ENCODE measurements at regions of chr22 and their contacts with region 1.

Region 1: DNA sequence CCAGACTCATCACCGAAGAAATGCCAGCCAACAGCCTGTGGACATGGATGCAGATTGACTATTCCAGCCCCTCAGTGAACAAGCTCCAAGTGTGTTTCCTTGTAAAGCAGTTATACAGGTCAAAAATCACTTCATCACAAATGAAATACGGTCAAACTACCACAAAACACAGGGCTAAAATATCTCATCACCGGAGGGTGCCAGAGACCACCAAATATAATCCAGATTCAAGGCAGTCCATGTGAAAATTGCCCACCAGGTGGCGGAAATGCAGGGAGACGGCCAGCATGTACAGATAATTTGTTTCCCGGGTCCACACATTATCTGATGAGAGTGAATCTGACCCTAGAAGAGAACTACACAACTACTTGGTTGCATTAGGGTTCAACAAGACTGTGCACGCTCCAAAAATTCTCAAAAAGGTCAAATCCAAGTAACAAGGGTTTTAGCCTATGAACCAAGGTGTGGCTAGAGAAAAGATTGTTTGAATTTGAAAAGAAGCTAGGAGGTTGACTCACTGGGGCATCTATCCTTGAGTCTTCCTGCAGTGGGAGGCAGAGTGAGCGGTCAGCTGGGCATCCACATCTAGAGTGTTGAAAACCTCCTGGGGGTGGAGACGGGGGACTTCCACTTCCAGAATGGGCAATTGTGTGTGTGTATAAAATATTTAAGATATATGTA is 71.7 kb downstream of the IGLL5 start:
- DNase-seq: peak; percentile 84

Region 2: DNA sequence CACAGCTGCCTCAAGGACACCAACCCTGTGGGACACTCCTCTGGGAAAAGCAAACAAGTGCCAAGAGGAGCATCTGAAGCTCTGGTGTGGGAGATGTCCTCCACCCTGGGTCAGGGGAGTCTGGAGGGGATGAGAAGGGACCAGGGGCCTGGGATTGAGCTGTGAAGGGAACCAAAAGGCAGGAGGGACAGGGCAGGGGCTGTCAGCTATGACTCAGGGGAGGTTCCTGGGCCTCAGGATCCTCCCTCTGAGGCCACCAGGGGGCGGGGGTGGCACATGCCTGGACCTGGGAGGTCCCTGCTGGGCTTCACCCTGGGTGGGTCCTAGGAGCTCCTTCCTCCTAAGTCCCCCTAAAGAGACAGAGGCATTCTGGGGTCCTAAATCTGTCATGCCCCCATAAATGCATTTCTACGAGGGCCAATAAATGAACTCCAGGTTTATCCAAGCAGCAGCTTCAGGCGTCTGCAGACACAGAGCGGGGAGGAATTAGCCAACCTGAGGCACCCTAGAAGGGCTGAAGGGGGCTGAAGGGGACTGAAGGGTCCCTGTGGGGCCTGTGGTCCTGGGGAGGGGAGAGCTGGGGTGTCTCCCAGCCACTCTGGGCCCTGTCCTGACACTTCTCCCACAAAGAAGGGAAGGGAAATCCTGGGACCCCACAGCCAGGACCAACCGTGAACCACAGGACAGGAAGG is 103.5 kb before region 1 on chr22:
- in situ Hi-C with region 1: loop called (anchors 10 kb)
- DNase-seq: peak; percentile 35

Region 3: GRCh38 chr22:23128269-23129108 is 169.2 kb after region 1 on chr22:
- in situ Hi-C with region 1: loop called (anchors 10 kb)
- DNase-seq: peak; percentile 62

Region 4: GRCh38 chr22:23251445-23252232 is 292.4 kb after region 1 on chr22:
- in situ Hi-C with region 1: loop called (anchors 25 kb)
- DNase-seq: no peak